T-cell (primary cell): ENCODE measurements at regions of chr3 and their contacts with region 1.

Region 1: GRCh38 chr3:177883957-177884356 is 652.3 kb upstream of the KCNMB2 start:
- DNase-seq: no peak
- ATAC-seq: no peak
- H3K4me3 ChIP-seq: no peak overlapping the region
- H3K4me3 Mint-ChIP-seq: no peak overlapping the region
- H3K27ac ChIP-seq: no peak overlapping the region
- H3K27ac Mint-ChIP-seq: peak overlapping the region in 1 of 2 donors; percentile 24
- H3K4me1 ChIP-seq: peaks cover 0 to 4% of the 10 kb centered on the region in 2 experiments
- H3K4me1 Mint-ChIP-seq: peaks cover 8 to 23% (median 11%) of the 10 kb centered on the region in 3 donors
- H3K27me3 ChIP-seq: no peaks in the 10 kb centered on the region
- H3K27me3 Mint-ChIP-seq: no peaks in the 10 kb centered on the region

Region 2: DNA sequence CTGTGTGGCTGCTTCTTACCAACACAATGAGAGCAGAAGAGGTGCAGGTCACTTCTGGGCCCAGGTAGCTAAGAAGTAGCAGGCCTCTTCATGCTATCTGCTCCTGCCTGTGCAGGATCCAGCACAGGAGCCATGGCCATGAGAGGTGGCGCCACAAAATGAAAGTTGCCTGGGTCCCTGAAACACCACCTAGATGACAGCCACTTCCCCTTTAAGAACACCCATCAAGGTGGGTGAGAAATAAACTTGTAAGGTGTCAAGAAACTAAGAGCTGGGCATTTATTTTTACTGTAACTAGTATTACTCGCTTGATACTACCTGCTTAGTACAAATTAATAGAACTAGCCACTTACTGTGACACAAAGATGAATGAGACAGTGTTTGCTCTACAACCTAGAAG is 202.1 kb before region 1 on chr3:
- CTCF ChIA-PET with region 1: no interaction called
- POLR2A ChIA-PET with region 1: interaction called in 1 of 2 experiments, 13 read pairs
- DNase-seq: peak in 3 of 35 experiments; percentile 1 to 13 (median 3)
- ATAC-seq: no peak
- H3K4me3 ChIP-seq: no peak overlapping the region
- H3K4me3 Mint-ChIP-seq: no peak overlapping the region
- H3K27ac ChIP-seq: no peak overlapping the region
- H3K27ac Mint-ChIP-seq: no peak overlapping the region
- H3K4me1 ChIP-seq: peaks cover 0 to 10% of the 10 kb centered on the region in 2 experiments
- H3K4me1 Mint-ChIP-seq: peaks cover 19 to 36% (median 34%) of the 10 kb centered on the region in 3 donors
- H3K27me3 ChIP-seq: no peaks in the 10 kb centered on the region
- H3K27me3 Mint-ChIP-seq: no peaks in the 10 kb centered on the region

Region 3: DNA sequence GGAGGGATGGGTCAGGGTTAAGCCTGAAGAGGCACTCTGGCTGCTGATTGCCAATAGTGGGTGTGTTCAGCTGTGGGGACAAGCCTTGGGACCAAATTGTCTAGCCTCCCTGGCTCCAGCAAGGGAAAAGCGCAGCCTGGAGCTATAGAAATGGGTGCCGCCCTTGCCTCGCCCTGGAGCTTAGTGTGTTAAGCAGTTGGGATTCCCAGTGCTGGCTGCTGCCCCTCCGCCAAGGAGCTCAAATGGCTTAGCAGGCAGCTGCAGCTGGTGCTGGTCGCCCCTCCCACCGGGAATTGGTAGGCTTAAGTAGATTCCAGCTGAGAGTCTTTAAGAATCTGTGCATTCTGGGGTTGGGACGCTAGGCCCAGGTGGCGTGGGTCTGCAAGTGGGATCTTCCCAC is 23.8 kb before region 1 on chr3:
- CTCF ChIA-PET with region 1: no interaction called
- POLR2A ChIA-PET with region 1: no interaction called
- DNase-seq: no peak
- ATAC-seq: no peak
- H3K4me3 ChIP-seq: no peak overlapping the region
- H3K4me3 Mint-ChIP-seq: no peak overlapping the region
- H3K27ac ChIP-seq: no peak overlapping the region
- H3K27ac Mint-ChIP-seq: no peak overlapping the region
- H3K4me1 ChIP-seq: no peaks in the 10 kb centered on the region
- H3K4me1 Mint-ChIP-seq: no peaks in the 10 kb centered on the region
- H3K27me3 ChIP-seq: no peaks in the 10 kb centered on the region
- H3K27me3 Mint-ChIP-seq: peaks cover 0 to 6% of the 10 kb centered on the region in 2 donors